Activated naive CD4-positive, alpha-beta T cell treated with anti-CD3 and anti-CD28 coated beads for 36 hours (primary cell): ENCODE measurements at regions of chr14 and their contacts with region 1.

Region 1: GRCh38 chr14:72926292-72927028 is at the start of gene DCAF4:
- DNase-seq: peak; percentile 96
- H3K4me3 Mint-ChIP-seq: peak within 1 kb of the TSS; percentile 94
- H3K27ac Mint-ChIP-seq: peak within 1 kb of the TSS; percentile 56
- H3K4me1 Mint-ChIP-seq: peaks cover 6% of the 10 kb centered on the region
- H3K27me3 Mint-ChIP-seq: no peaks in the 10 kb centered on the region
- total RNA-seq, gene DCAF4: 13.3 to 16.4 TPM

Region 2: GRCh38 chr14:72222046-72222445 is 704.4 kb before region 1 on chr14:
- CTCF ChIA-PET with region 1: no interaction called
- intact Hi-C with region 1: no loop called
- DNase-seq: no peak
- H3K4me3 Mint-ChIP-seq: no peak overlapping the region
- H3K27ac Mint-ChIP-seq: no peak overlapping the region
- H3K4me1 Mint-ChIP-seq: no peaks in the 10 kb centered on the region
- H3K27me3 Mint-ChIP-seq: peaks cover 8% of the 10 kb centered on the region

Region 3: GRCh38 chr14:72443991-72444441 is 482.4 kb before region 1 on chr14:
- CTCF ChIA-PET with region 1: no interaction called
- intact Hi-C with region 1: no loop called
- DNase-seq: peak; percentile 60
- H3K4me3 Mint-ChIP-seq: no peak overlapping the region
- H3K27ac Mint-ChIP-seq: peak overlapping the region; percentile 12
- H3K4me1 Mint-ChIP-seq: peaks cover 32% of the 10 kb centered on the region
- H3K27me3 Mint-ChIP-seq: no peaks in the 10 kb centered on the region

Region 4: DNA sequence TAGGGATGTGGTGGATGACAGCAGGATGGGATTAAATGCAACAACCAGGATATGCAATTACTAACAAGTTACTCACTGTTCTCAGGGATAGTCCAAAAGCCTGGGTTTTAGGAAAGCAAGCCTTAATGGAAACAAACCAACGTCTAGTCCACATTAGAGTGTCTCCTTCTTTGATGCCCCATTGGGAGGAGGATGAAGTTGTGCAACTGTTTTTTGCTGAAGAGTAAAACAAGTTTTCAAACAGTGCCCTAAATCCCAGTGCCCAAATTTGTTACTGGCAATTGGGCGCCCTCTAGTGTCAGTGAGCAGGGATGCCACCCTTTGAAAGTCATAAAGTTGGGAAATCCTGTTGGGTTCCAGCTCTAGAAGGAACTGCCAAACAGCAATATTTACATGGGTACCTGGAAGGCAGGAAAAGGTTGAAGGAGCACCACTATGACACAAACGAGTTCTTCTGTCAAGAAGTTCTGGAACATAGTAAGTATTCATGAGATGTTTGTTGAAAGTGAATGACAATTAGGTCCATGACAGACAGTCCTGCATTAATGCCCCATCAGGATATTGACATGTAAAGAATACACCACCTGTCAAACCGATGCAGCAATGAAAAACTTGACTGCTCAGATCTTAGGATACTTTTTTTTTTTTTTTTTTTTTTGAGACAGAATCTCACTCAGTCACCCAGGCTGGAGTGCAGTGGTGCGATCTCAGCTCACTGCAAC is 21.5 kb before region 1 on chr14:
- CTCF ChIA-PET with region 1: interaction called, 4 read pairs
- intact Hi-C with region 1: loop called (anchors 2 kb)
- DNase-seq: peak; percentile 76
- H3K4me3 Mint-ChIP-seq: no peak overlapping the region
- H3K27ac Mint-ChIP-seq: no peak overlapping the region
- H3K4me1 Mint-ChIP-seq: no peaks in the 10 kb centered on the region
- H3K27me3 Mint-ChIP-seq: peaks cover 10% of the 10 kb centered on the region

Region 5: DNA sequence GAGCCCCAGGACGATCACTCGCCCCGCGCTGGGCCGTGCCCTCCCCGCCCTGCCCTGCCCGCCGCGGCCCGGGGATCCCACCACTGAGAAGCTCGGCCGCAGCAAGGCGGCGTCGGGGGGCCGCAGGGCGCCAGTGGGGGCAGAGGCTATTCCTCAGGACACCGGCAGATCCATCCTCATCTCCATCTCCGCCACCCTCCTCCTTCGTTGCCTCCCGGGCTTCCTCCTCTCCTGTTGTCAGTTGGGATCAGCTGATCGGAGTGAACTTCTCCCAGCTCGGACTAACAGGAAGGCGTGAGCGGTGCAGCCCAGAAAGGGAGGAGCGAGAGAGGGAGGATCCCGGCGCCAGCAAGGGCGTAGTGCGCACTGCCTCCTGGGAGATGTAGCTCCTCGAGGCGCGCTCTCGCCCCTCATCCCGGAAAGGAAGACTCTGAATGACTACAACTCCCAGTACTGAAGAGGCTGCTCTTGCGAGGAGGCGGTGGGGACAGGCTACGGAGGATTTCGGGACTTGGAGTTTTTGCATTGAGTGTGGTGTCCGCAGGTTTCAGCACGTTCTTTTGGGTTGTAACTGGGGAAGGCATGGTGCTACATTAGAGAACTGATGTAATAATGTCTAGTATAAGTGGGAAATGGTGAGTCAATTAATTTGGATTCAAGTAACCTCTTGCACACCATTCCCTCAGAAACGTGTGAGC is 100.5 kb after region 1 on chr14 and contains the start of gene ZFYVE1:
- CTCF ChIA-PET with region 1: no interaction called
- intact Hi-C with region 1: loop called (anchors 1 kb)
- DNase-seq: peak; percentile 97
- H3K4me3 Mint-ChIP-seq: peak within 1 kb of the TSS; percentile 92
- H3K27ac Mint-ChIP-seq: peak within 1 kb of the TSS; percentile 80
- H3K4me1 Mint-ChIP-seq: peaks cover 39% of the 10 kb centered on the region
- H3K27me3 Mint-ChIP-seq: no peaks in the 10 kb centered on the region
- total RNA-seq, gene ZFYVE1: 8.5 to 9.2 TPM

Region 6: GRCh38 chr14:73116079-73116665 is 189.7 kb after region 1 on chr14:
- CTCF ChIA-PET with region 1: no interaction called
- intact Hi-C with region 1: no loop called
- DNase-seq: no peak
- H3K4me3 Mint-ChIP-seq: no peak overlapping the region
- H3K27ac Mint-ChIP-seq: peak overlapping the region; percentile 28
- H3K4me1 Mint-ChIP-seq: peaks cover 11% of the 10 kb centered on the region
- H3K27me3 Mint-ChIP-seq: no peaks in the 10 kb centered on the region

Region 7: GRCh38 chr14:73463411-73463810 is 537.0 kb after region 1 on chr14:
- CTCF ChIA-PET with region 1: no interaction called
- intact Hi-C with region 1: loop called (anchors 10 kb)
- DNase-seq: peak; percentile 72
- H3K4me3 Mint-ChIP-seq: peak overlapping the region; percentile 32
- H3K27ac Mint-ChIP-seq: peak overlapping the region; percentile 52
- H3K4me1 Mint-ChIP-seq: peaks cover 52% of the 10 kb centered on the region
- H3K27me3 Mint-ChIP-seq: no peaks in the 10 kb centered on the region